H1 (cell line): ENCODE measurements at regions of chr7 and their contacts with region 1.

Region 1: GRCh38 chr7:39580149-39580874 is 14.1 kb downstream of the YAE1 start:
- DNase-seq: peak; percentile 67 to 74
- H3K4me3 ChIP-seq: no peak overlapping the region
- H3K27ac ChIP-seq: no peak overlapping the region
- H3K4me1 ChIP-seq: peaks cover 0 to 4% (median 2%) of the 10 kb centered on the region in 4 experiments; a peak in 4 of 7 replicates
- H3K27me3 ChIP-seq: no peaks in the 10 kb centered on the region
- CTCF ChIP-seq: peak; percentile 6 to 92 (median 91)
- EP300 ChIP-seq: no peak
- POLR2A ChIP-seq: no peak
- RAD21 ChIP-seq: peak; percentile 98 to 99

Region 2: GRCh38 chr7:39616138-39616537 is 35.8 kb after region 1 on chr7:
- CTCF ChIA-PET with region 1: interaction called, 44 read pairs
- POLR2A ChIA-PET with region 1: no interaction called
- DNase-seq: no peak
- H3K4me3 ChIP-seq: no peak overlapping the region
- H3K27ac ChIP-seq: no peak overlapping the region
- H3K4me1 ChIP-seq: no peaks in the 10 kb centered on the region
- H3K27me3 ChIP-seq: no peaks in the 10 kb centered on the region
- CTCF ChIP-seq: no peak
- EP300 ChIP-seq: no peak
- POLR2A ChIP-seq: no peak
- RAD21 ChIP-seq: no peak

Region 3: GRCh38 chr7:39709768-39710311 is 129.5 kb after region 1 on chr7:
- CTCF ChIA-PET with region 1: interaction called, 11 read pairs
- POLR2A ChIA-PET with region 1: no interaction called
- DNase-seq: no peak
- H3K4me3 ChIP-seq: no peak overlapping the region
- H3K27ac ChIP-seq: no peak overlapping the region
- H3K4me1 ChIP-seq: no peaks in the 10 kb centered on the region; a peak in 1 of 7 replicates
- H3K27me3 ChIP-seq: no peaks in the 10 kb centered on the region; a peak in 1 of 7 replicates
- CTCF ChIP-seq: no peak
- EP300 ChIP-seq: no peak
- POLR2A ChIP-seq: no peak
- RAD21 ChIP-seq: no peak

Region 4: DNA sequence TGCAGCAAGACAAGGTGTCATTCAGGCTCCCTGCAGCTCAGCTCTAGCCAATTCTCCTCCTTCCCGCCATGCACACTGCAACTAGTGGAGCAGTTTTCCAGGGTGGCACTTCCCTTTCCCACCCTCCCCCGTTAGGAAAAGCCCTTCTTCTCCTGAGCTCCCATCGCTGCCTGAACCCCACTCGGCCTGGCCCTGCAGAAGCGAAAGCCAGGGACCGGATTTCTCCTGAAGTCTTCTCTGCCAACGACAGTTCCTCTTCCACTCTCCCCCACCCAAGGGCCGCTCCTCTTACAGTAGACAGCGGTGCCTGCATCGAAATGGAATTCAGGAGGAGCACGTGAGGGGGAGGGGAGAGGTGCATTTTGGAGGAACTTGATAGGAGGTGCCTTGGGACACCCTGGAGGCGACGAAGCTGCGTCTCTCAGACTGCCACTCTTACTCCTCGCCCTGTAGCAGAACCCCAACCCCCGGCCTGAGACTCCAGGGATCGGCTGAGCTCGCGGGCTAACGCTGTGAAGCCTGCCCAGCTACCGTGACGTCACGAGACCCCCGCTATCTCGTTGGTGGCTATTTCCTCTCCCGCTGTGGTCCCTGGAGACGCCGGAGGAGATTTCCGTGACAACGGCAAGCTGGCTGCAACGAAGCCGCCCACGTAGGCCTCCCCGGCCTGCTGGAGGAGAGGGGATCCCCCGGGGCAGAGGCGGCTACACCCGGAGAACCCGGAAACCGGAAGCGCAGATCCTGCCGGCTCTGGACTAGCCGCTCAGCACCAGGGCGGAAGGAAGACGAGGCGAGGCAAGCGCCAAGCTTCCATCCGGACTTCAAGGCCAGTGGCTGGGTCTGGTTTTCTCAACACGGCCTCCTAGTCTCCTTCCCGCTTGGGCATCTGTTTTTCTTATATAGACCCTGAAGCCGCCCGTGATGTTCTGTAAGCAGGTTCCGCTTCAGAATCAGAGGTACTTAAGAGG is 152.8 kb after region 1 on chr7:
- CTCF ChIA-PET with region 1: interaction called, 406 read pairs
- POLR2A ChIA-PET with region 1: no interaction called
- DNase-seq: peak; percentile 94 to 99
- H3K4me3 ChIP-seq: peak overlapping the region; percentile 34 to 65 (median 58)
- H3K27ac ChIP-seq: peak overlapping the region; percentile 75
- H3K4me1 ChIP-seq: peaks cover 6 to 13% (median 7%) of the 10 kb centered on the region in 4 experiments
- H3K27me3 ChIP-seq: peaks cover 0 to 15% (median 6%) of the 10 kb centered on the region in 4 experiments; a peak in 3 of 7 replicates
- CTCF ChIP-seq: no peak
- EP300 ChIP-seq: no peak
- POLR2A ChIP-seq: peak in 1 of 2 experiments; percentile 61
- RAD21 ChIP-seq: 0 out of 4 replicates have a peak, but pooled peaks of 1 of the 2 experiments have one; percentile 11